ENCODE measurements at regions of chr3 and their contacts with region 1.

Region 1: GRCh38 chr3:10213156-10213792 is 35.0 kb upstream of the TATDN2 start:
- DNase-seq: no peak
- H3K4me3 ChIP-seq: no peak overlapping the region
- H3K27ac ChIP-seq: no peak overlapping the region
- H3K27me3 ChIP-seq: no peaks in the 10 kb centered on the region
- CTCF ChIP-seq: no peak

Region 2: DNA sequence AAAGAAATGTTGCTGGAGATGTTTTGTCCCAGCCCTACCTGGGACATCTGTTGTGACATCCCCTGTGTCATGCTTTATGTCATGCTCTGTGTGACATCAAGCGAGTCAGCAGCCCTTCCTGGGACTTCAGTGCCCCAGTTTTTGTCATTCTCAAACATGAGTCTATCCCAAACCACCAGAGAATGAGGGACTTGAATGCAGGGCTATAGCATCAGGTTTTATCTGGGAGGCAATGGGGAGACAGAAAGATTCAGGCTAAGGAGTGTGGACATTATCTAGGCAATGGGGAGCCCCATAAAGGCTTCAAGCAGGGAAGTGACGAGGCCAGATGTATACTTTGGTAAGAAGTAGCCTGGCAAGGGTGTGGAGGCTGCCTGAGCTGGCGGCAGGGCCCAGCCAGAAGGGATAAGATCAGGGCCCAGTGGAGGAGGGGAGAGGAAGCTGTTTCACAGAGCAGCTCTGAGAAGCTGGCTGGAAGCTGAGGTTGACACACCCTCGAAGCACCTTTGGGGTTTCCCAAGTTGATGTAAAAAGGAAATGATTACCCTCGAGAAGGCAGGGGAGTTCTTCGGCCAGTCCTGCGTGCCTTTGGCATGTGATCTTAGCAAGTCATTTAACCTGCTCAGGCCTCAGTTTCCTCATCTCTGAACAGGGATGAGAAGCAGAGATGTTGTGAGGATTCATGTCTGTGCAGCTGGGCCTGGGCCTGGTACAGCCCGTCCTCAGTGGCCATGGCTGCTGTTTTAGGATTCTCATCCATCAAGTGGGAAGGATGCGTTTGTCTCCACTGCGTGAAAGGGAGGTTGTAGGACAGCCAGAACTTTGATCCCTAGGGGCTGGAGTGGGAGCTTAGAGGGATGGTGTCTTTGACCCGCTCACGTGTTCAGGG is 14.3 kb before region 1 on chr3:
- intact Hi-C with region 1: loop called in 1 of 2 experiments (anchors 1 kb)
- DNase-seq: no peak
- H3K4me3 ChIP-seq: no peak overlapping the region
- H3K27ac ChIP-seq: peak overlapping the region in 56 of 59 donors; percentile 8 to 100 (median 74)
- H3K27me3 ChIP-seq: no peaks in the 10 kb centered on the region
- CTCF ChIP-seq: no peak